Gastrocnemius medialis (tissue), 4 donors: ENCODE measurements at regions of chr7 and their contacts with region 1.

Region 1: DNA sequence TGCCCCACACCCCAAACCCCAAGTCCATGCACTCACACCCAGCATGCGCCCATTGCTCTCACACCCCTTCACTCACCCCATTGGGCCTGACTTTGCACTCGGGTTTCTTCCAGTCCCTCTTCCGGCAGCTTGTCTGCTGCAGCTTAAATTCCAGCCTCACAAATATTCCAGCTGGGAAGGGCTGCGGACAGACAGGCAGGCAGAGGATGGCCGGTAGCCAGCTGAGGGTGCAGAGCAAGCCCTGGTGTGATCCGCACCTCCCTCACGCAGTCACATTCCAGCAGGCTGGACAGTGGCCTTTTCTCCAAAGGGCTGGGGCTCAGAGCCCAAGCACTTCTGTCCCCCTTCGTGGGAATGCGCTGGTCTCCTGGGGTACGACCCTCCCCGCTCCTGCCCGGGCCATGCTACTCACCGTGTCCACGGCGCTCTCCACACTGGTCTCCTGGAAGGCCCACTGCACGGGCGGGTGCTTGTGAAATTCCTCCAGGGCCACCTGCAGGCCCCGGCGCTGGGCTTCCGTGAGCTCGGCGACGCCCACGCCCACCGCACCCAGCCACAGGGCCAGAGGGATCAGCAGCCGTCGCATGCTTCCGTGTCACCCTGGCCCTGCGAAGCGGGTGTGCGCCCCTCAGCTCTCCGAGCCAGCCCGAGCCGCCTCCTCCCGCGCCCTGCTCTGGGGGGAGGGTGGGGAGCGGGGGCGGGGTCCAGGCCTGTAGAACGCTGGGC is 1.2 kb downstream of the RARRES2 start:
- DNase-seq: no peak
- ATAC-seq: peak in 1 of 2 donors; percentile 18
- H3K4me3 ChIP-seq: peak overlapping the region; percentile 36 to 49 (median 42)
- H3K27ac ChIP-seq: peak overlapping the region in 2 of 4 donors; percentile 2 to 31
- H3K4me1 ChIP-seq: peaks cover 5 to 11% of the 10 kb centered on the region in 2 donors
- H3K27me3 ChIP-seq: peaks cover 13 to 54% (median 39%) of the 10 kb centered on the region in 3 donors
- CTCF ChIP-seq: no peak
- POLR2A ChIP-seq: no peak

Region 2: DNA sequence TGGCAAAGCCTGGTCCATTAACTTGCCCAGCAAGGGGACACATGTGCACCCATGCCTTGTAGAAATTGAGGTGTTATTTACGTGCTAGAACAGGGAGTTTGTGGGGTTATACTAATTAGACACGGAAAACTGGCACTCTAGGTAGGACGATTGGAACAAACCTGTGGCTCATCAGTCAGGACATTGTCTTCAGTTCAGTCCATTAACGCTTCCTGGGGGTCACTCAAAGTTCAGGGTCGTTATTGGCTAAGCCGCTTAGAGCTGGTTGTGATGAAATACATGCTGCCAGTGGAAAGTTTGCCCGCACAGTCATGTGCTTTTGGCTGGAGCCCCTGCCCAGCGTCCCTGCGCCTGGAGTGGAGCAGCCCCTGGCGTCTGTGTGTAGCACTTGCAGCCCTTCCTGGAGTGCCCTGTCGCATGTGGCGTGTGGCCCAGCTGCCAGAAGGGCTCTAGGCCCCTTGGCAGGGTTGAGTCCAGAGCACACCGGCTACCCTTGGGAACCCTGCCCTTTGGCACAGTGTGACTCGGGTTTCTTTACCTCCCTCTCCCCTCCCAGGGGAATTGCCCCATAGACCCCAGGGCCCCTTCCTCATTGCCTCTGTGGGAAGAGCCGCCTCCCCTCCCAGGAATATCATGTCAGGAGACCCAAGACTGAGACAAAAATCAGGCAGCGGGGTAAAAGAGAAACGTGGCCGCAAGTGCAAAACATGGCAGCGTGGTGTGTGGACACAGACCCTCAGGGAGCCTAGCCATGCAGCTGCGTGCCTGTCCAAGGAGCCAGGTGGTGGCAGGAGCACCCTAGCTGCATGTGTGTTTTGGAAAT is 48.7 kb after region 1 on chr7:
- in situ Hi-C with region 1: loop called in 1 of 4 experiments (anchors 10 kb)
- intact Hi-C with region 1: no loop called
- DNase-seq: peak; percentile 70 to 93
- ATAC-seq: peak; percentile 90 to 92
- H3K4me3 ChIP-seq: no peak overlapping the region
- H3K27ac ChIP-seq: peak overlapping the region; percentile 72 to 80 (median 76)
- H3K4me1 ChIP-seq: peaks cover 14 to 33% of the 10 kb centered on the region in 2 donors
- H3K27me3 ChIP-seq: no peaks in the 10 kb centered on the region
- CTCF ChIP-seq: peak; percentile 89 to 98 (median 93)
- POLR2A ChIP-seq: no peak

Region 3: GRCh38 chr7:150404805-150405583 is 64.8 kb after region 1 on chr7:
- in situ Hi-C with region 1: no loop called
- intact Hi-C with region 1: no loop called
- DNase-seq: peak; percentile 73 to 83
- ATAC-seq: peak; percentile 85
- H3K4me3 ChIP-seq: peak overlapping the region; percentile 69 to 83 (median 74)
- H3K27ac ChIP-seq: peak overlapping the region; percentile 94 to 97 (median 96)
- H3K4me1 ChIP-seq: peaks cover 5 to 9% of the 10 kb centered on the region in 2 donors
- H3K27me3 ChIP-seq: no peaks in the 10 kb centered on the region
- CTCF ChIP-seq: peak in 1 of 5 experiments; percentile 42
- POLR2A ChIP-seq: peak; percentile 62 to 73

Region 4: GRCh38 chr7:150466477-150466876 is 126.3 kb after region 1 on chr7:
- in situ Hi-C with region 1: no loop called
- intact Hi-C with region 1: no loop called
- DNase-seq: no peak
- ATAC-seq: no peak
- H3K4me3 ChIP-seq: peak overlapping the region in 3 of 4 donors; percentile 36 to 41 (median 39)
- H3K27ac ChIP-seq: peak overlapping the region in 3 of 4 donors; percentile 40 to 52 (median 40)
- H3K4me1 ChIP-seq: no peaks in the 10 kb centered on the region
- H3K27me3 ChIP-seq: no peaks in the 10 kb centered on the region
- CTCF ChIP-seq: no peak
- POLR2A ChIP-seq: peak in 1 of 2 donors; percentile 12